Astrocyte of the spinal cord (primary cell): ENCODE measurements at regions of chr5 and their contacts with region 1.

Region 1: GRCh38 chr5:113140837-113141661 is 164.5 kb downstream of the DCP2 start:
- DNase-seq: peak; percentile 76
- H3K4me3 ChIP-seq: no peak overlapping the region
- CTCF ChIP-seq: no peak

Region 2: GRCh38 chr5:112958093-112959088 is 182.7 kb before region 1 on chr5:
- in situ Hi-C with region 1: no loop called
- DNase-seq: peak; percentile 98
- H3K4me3 ChIP-seq: no peak overlapping the region
- CTCF ChIP-seq: no peak

Region 3: DNA sequence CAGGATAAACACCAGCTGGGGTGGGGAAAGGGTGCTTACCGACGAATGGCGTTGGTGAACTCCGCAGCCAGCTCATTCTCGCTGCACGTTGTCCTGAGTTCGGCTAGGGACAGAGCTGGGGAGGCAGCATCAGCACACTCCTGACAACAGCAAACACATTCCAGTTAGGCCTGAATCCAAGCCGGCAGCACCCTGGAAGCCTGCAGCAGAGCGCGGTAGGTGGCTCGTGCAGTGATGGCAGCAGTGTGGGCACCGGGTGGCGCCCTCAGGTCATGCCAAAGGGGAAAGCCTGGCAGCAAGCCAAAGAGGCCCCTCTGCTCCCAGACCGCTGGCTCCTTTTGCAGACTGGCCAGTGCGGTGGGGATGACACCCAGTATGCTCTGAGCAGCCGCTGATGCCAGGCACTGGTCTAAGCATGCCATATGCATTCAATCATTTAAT is 97.5 kb before region 1 on chr5:
- in situ Hi-C with region 1: loop called (anchors 10 kb)
- DNase-seq: peak; percentile 35
- H3K4me3 ChIP-seq: no peak overlapping the region
- CTCF ChIP-seq: peak; percentile 42

Region 4: GRCh38 chr5:113538313-113538712 is 397.3 kb after region 1 on chr5:
- in situ Hi-C with region 1: no loop called
- DNase-seq: no peak
- H3K4me3 ChIP-seq: no peak overlapping the region
- CTCF ChIP-seq: no peak